AG04449 (cell line): ENCODE measurements at regions of chr10 and their contacts with region 1.

Region 1: DNA sequence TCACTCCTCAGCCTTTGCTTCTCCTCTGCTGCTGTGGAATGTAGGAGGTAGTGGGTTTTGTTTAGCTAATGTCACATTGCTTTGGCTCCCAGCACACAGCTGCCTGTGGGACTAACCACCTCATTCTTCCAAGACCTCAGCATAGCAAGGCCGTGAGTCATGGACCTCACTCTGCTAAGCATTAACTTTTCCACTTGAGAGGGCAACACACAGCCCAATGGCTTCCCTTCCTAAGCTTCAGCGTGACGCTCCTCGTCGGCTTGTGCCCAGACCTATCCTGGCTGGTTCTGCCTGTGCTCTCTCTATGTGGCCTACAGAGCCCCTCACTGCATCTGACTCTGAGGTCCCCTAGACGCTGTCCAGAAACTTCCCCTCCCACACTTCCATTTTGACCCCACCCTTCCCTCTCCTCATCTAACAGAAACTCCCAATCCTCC is 23.3 kb downstream of the MYOF start:
- DNase-seq: peak; percentile 99
- H3K4me3 ChIP-seq: no peak overlapping the region
- CTCF ChIP-seq: no peak

Region 2: DNA sequence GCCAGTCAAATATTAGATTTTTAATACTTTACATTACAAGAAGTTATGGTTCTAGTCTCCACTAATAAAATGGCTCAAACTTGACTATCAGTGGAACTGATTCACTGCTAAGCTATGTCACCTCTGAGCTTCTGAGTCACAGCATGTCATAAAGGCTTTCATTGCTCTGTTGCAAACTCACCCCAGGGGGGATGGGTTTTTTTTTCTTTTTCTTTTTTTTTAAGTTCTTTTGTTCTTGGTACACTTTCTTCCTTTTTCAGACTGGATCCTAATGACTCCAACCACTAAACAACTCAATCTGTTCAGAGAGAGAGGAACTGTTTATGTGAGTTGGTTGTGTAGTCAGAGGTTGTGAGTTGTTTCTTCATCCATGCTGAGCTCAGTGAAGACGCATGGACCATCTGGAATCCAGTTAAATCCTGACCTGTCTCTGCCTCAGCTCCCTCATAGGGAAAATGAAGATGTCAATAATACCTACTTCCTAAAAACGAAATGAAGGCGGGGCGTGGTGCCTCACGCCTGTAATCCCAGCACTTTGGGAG is 12.3 kb after region 1 on chr10:
- CTCF ChIA-PET with region 1: interaction called, 13 read pairs
- POLR2A ChIA-PET with region 1: interaction called, 21 read pairs
- DNase-seq: peak; percentile 70
- H3K4me3 ChIP-seq: no peak overlapping the region
- CTCF ChIP-seq: no peak

Region 3: DNA sequence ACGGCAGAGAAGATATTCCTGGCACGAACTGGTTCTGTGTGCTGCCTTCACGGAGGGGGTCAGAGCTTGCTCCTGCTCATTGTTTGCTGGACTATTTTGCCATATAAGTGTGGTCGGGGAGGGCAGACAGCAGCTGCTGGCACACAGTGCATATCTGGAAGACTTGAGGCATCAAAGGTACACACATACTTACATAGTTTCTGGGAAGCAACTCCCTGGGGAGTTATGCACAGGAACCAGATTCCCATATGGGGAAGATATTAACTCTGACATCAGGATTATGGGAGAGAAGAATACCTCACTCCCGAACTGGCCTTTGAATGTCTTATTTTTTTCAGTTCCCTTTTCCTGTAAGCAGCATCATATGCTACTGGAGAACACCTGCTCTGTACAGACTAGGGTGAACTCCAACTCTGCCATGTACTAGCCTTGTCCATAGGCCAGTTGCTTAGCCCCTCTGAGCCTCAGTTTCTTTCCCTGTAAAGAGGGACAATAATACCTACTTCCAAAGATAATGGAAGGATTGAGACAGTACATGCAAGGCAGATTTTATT is 340.4 kb after region 1 on chr10:
- CTCF ChIA-PET with region 1: no interaction called
- POLR2A ChIA-PET with region 1: no interaction called
- DNase-seq: no peak
- H3K4me3 ChIP-seq: no peak overlapping the region
- CTCF ChIP-seq: no peak